ENCODE measurements at regions of chr2 and their contacts with region 1.

Region 1: DNA sequence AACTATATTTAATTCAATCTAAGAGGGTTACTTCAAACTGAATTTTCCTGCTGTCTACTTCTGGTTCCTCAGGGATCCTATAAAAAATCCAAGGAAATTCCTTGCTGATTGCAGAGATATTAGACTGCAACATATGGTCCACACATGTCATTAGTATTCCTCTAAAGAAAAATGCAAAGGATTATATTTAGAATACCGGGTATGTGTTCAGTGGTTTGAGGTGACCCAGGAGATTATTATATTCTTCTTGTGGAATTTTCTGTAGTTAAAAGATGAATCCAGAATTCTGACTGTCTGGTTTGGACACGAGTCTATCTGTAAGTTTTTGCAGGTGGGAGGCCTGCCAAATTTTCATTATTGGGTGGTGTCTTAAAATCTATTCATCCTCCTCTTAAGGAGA is 18.2 kb downstream of the HOXD1 start:
- DNase-seq: no peak
- ATAC-seq: no peak
- H3K4me3 ChIP-seq: no peak overlapping the region
- H3K4me3 Mint-ChIP-seq: no peak overlapping the region
- H3K27ac ChIP-seq: no peak overlapping the region
- H3K27ac Mint-ChIP-seq: no peak overlapping the region
- H3K4me1 ChIP-seq: no peaks in the 10 kb centered on the region
- H3K4me1 Mint-ChIP-seq: no peaks in the 10 kb centered on the region
- H3K27me3 ChIP-seq: peaks cover 0 to 20% of the 10 kb centered on the region in 2 experiments
- H3K27me3 Mint-ChIP-seq: peaks cover 39 to 43% of the 10 kb centered on the region in 2 donors

Region 2: GRCh38 chr2:176160251-176160975 is 46.3 kb before region 1 on chr2:
- CTCF ChIA-PET with region 1: no interaction called
- POLR2A ChIA-PET with region 1: interaction called in 1 of 2 experiments, 11 read pairs
- DNase-seq: no peak
- ATAC-seq: no peak
- H3K4me3 ChIP-seq: no peak overlapping the region
- H3K4me3 Mint-ChIP-seq: peak overlapping the region in 1 of 3 donors; percentile 15
- H3K27ac ChIP-seq: no peak overlapping the region
- H3K27ac Mint-ChIP-seq: no peak overlapping the region
- H3K4me1 ChIP-seq: peaks cover 2 to 34% of the 10 kb centered on the region in 2 experiments
- H3K4me1 Mint-ChIP-seq: peaks cover 19 to 27% (median 22%) of the 10 kb centered on the region in 3 donors
- H3K27me3 ChIP-seq: peaks cover 30 to 94% of the 10 kb centered on the region in 2 experiments
- H3K27me3 Mint-ChIP-seq: peaks cover 60 to 84% of the 10 kb centered on the region in 2 donors

Measured in T-cell (primary cell).